ENCODE measurements at regions of chr12 and their contacts with region 1.

Region 1: DNA sequence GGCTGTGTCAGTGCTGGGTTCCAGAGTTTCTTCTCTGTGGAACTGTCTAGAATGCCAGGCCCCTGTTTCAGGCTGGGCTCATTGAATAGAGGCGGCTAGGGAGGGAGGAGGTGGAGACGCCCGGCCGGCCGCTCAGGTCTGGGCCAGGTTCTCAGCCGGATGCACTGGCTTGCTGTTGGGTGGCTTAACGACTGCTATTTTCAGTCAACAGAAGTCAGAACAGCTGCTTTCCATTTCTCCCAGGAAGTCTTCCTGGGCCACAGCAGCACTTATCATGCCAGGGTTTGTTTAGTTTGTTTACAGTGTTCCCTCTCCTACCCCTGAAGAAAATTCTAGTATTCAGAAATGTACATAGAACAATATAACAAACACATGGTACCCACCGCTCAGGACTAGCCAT is 26.0 kb upstream of the VPS37B start:
- H3K4me3 ChIP-seq: no peak overlapping the region
- H3K27ac ChIP-seq: no peak overlapping the region
- H3K4me1 ChIP-seq: no peaks in the 10 kb centered on the region
- CTCF ChIP-seq: no peak

Region 2: DNA sequence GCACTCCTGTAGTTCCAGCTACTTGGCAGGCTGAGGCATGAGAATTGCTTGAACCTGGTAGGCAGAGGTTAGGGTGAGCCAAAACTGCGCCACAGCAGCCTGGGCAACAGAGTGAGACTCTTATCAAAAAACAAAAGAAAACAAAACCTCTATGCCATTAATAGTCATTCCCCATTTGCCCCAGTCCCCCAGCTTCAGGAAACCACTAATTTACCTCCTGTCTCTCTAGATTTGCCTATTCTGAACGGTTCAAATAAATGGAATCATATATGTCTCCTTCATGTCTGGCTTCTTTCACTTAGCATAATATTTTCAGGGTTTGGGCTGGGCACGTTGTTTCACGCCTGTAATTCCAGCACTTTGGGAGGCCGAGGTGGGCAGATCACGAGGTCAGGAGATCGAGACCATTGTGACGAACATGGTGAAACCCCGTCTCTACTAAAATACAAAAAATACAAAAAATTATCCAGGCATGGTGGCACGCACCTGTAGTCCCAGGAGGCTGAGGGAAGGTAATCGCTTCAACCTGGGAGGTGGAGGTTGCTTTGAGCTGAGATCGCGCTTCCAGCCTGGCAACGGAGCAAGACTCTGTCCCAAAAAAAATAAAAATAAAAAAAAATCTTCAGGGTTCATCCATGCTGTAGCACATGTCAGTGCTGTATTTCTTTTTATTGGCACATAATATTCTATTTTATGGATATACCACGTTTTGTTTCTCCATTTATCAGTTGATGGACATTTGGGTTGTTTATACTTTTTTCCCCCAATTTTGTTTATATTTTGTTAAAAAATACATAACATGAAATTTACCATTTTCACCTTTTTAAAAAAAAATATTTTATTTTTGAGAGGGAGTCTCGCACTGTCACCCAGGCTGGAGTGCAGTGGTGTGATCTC is 362.9 kb before region 1 on chr12:
- CTCF ChIA-PET with region 1: no interaction called
- POLR2A ChIA-PET with region 1: no interaction called
- H3K4me3 ChIP-seq: no peak overlapping the region
- H3K27ac ChIP-seq: no peak overlapping the region
- H3K4me1 ChIP-seq: no peaks in the 10 kb centered on the region
- CTCF ChIP-seq: no peak

Region 3: GRCh38 chr12:122894193-122895191 is 27.4 kb before region 1 on chr12:
- CTCF ChIA-PET with region 1: interaction called, 11 read pairs
- POLR2A ChIA-PET with region 1: no interaction called
- H3K4me3 ChIP-seq: peak overlapping the region; percentile 67
- H3K27ac ChIP-seq: peak overlapping the region; percentile 63; the same call in 1 of the 2 replicates
- H3K4me1 ChIP-seq: peaks cover 13% of the 10 kb centered on the region
- CTCF ChIP-seq: peak; percentile 30; the same call in 1 of the 2 replicates

Region 4: GRCh38 chr12:123150744-123151456 is 229.0 kb after region 1 on chr12 and contains the start of gene PITPNM2:
- CTCF ChIA-PET with region 1: no interaction called
- POLR2A ChIA-PET with region 1: no interaction called
- H3K4me3 ChIP-seq: peak within 1 kb of the TSS; percentile 60
- H3K27ac ChIP-seq: peak within 1 kb of the TSS; percentile 70; the same call in 1 of the 2 replicates
- H3K4me1 ChIP-seq: peaks cover 7% of the 10 kb centered on the region; the same call in 1 of the 2 replicates
- CTCF ChIP-seq: no peak

Measured in HEK293 (cell line).